Ovary (tissue), 10 donors: ENCODE measurements at regions of chr10 and their contacts with region 1.

Region 1: GRCh38 chr10:87734987-87735827 is 75.5 kb downstream of the PAPSS2 start:
- DNase-seq: peak; percentile 40 to 57 (median 52)
- H3K4me3 ChIP-seq: no peak overlapping the region
- H3K27ac ChIP-seq: peak overlapping the region; percentile 16 to 18
- H3K4me1 ChIP-seq: peaks cover 3% of the 10 kb centered on the region
- H3K27me3 ChIP-seq: no peaks in the 10 kb centered on the region
- CTCF ChIP-seq: peak; percentile 48 to 86 (median 86)
- EP300 ChIP-seq: no peak
- POLR2A ChIP-seq: no peak

Region 2: GRCh38 chr10:87531908-87532622 is 203.1 kb before region 1 on chr10:
- intact Hi-C with region 1: loop called in 3 of 4 experiments (anchors 2 to 10 kb)
- DNase-seq: peak in 2 of 5 donors; percentile 29 to 47
- H3K4me3 ChIP-seq: no peak overlapping the region
- H3K27ac ChIP-seq: peak overlapping the region in 1 of 2 donors; percentile 51
- H3K4me1 ChIP-seq: no peaks in the 10 kb centered on the region
- H3K27me3 ChIP-seq: no peaks in the 10 kb centered on the region
- CTCF ChIP-seq: no peak
- EP300 ChIP-seq: no peak
- POLR2A ChIP-seq: no peak

Region 3: DNA sequence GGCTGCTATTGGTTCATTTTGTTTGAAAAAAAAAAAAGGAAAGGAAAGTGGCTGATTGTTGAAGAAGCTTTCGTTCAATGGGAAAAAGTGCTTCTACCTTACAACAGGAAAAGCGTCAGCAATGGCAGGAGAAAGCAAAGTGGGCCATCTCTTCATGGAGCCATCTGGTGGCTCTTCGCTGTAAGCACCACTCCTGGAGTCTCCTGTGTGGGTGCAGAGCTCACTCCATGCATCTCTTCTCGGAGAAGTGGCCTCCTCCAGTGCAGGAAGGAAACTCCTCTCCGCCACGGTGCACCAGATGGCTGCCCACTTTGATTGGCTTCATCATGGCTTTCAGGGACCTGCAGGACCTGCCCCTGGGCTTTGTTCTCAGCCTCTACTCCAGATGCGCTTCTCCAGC is 379.2 kb after region 1 on chr10:
- intact Hi-C with region 1: no loop called
- DNase-seq: peak in 1 of 5 donors; percentile 35
- H3K4me3 ChIP-seq: no peak overlapping the region
- H3K27ac ChIP-seq: no peak overlapping the region
- H3K4me1 ChIP-seq: no peaks in the 10 kb centered on the region
- H3K27me3 ChIP-seq: no peaks in the 10 kb centered on the region
- CTCF ChIP-seq: no peak
- EP300 ChIP-seq: no peak
- POLR2A ChIP-seq: no peak